H1 (cell line): ENCODE measurements at regions of chr22 and their contacts with region 1.

Region 1: GRCh38 chr22:39454385-39454871 is 2.4 kb upstream of the MGAT3 start:
- DNase-seq: no peak
- H3K4me3 ChIP-seq: no peak overlapping the region
- H3K27ac ChIP-seq: no peak overlapping the region
- H3K4me1 ChIP-seq: peaks cover 0 to 30% (median 20%) of the 10 kb centered on the region in 4 experiments; a peak in 6 of 7 replicates
- H3K27me3 ChIP-seq: peaks cover 5 to 24% (median 18%) of the 10 kb centered on the region in 4 experiments; a peak in 6 of 7 replicates
- CTCF ChIP-seq: no peak
- EP300 ChIP-seq: no peak
- POLR2A ChIP-seq: no peak
- RAD21 ChIP-seq: no peak

Region 2: GRCh38 chr22:39428578-39429071 is 25.8 kb before region 1 on chr22:
- CTCF ChIA-PET with region 1: interaction called, 19 read pairs
- POLR2A ChIA-PET with region 1: interaction called, 6 read pairs
- DNase-seq: peak; percentile 80 to 85
- H3K4me3 ChIP-seq: peak overlapping the region in 2 of 4 experiments; percentile 19 to 32; a peak in 2 of 8 replicates
- H3K27ac ChIP-seq: peak overlapping the region; percentile 46; the same call in 1 of the 2 replicates
- H3K4me1 ChIP-seq: peaks cover 8 to 23% (median 17%) of the 10 kb centered on the region in 4 experiments
- H3K27me3 ChIP-seq: no peaks in the 10 kb centered on the region
- CTCF ChIP-seq: peak in 2 of 3 experiments; percentile 43 to 52; a peak in 3 of 4 replicates
- EP300 ChIP-seq: peak; percentile 27 to 90; a peak in 2 of 3 replicates
- POLR2A ChIP-seq: peak in 1 of 2 experiments; percentile 50; a peak in 1 of 3 replicates
- RAD21 ChIP-seq: peak; percentile 38 to 43

Region 3: GRCh38 chr22:39471381-39472141 is 17.1 kb after region 1 on chr22:
- CTCF ChIA-PET with region 1: interaction called, 18 read pairs
- POLR2A ChIA-PET with region 1: interaction called, 9 read pairs
- DNase-seq: no peak
- H3K4me3 ChIP-seq: no peak overlapping the region; a peak in 1 of 8 replicates
- H3K27ac ChIP-seq: no peak overlapping the region
- H3K4me1 ChIP-seq: peaks cover 16 to 51% (median 39%) of the 10 kb centered on the region in 4 experiments
- H3K27me3 ChIP-seq: no peaks in the 10 kb centered on the region
- CTCF ChIP-seq: no peak
- EP300 ChIP-seq: no peak
- POLR2A ChIP-seq: no peak
- RAD21 ChIP-seq: no peak